GM12878 (cell line): ENCODE measurements at regions of chr4 and their contacts with region 1.

Region 1: DNA sequence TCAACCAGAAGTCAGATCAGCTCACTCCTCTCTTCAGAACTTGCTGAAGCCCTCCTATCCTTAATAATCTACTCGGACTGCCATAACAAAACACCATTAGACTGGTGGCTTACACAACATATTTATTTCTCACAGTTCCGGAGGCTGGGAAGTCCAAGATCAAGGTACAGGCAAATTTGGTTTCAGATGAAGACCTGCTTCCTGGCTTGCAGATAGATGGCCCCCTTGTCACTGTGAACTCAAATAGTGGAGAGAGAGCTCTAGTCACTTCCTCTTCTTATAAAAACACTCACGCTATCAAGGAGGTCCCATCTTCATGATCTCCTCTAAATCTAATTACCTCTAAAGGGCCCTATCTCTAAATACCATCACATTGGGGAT is 125.1 kb downstream of the CAMK2D start:
- DNase-seq: no peak
- ATAC-seq: peak; percentile 69
- H3K4me3 ChIP-seq: peak overlapping the region; percentile 9; the same call in 1 of the 2 replicates
- H3K27ac ChIP-seq: peak overlapping the region; percentile 16
- H3K4me1 ChIP-seq: peaks cover 53% of the 10 kb centered on the region
- H3K27me3 ChIP-seq: no peaks in the 10 kb centered on the region
- CTCF ChIP-seq: peak; percentile 25 to 48 (median 42); a peak in 4 of 6 replicates
- EP300 ChIP-seq: no peak
- POLR2A ChIP-seq: no peak
- RAD21 ChIP-seq: peak; percentile 54

Region 2: GRCh38 chr4:113539408-113539807 is 97.0 kb before region 1 on chr4:
- CTCF ChIA-PET with region 1: no interaction called
- POLR2A ChIA-PET with region 1: interaction called, 4 read pairs
- RAD21 ChIA-PET with region 1: interaction called, 8 read pairs
- SMC1A ChIA-PET with region 1: interaction called, 11 read pairs
- in situ Hi-C with region 1: no loop called
- intact Hi-C with region 1: no loop called
- DNase-seq: no peak
- ATAC-seq: peak; percentile 92
- H3K4me3 ChIP-seq: no peak overlapping the region
- H3K27ac ChIP-seq: no peak overlapping the region
- H3K4me1 ChIP-seq: no peaks in the 10 kb centered on the region
- H3K27me3 ChIP-seq: no peaks in the 10 kb centered on the region
- CTCF ChIP-seq: no peak
- EP300 ChIP-seq: no peak
- POLR2A ChIP-seq: no peak
- RAD21 ChIP-seq: no peak

Region 3: DNA sequence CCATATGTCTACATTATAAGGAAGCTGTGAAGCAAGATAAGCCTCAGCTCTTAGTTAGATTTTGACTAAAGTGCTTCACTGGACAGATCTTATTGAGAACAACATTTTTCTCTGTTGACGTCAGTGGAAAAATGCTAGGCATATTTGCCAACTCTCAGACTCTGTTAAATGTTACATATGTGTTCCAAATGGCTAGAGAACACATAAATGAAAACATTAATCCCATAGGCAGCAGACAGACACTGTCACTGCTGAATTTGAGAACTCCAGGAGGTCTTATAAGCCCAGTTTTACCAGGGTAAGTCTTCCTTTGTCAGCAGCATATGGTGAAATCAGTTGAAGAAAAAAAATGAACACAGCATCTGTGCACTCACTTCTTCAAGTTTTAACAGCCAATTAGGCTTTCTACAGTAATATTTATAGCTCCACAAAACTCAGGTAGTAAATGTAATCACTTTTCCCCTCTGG is 61.8 kb before region 1 on chr4:
- CTCF ChIA-PET with region 1: no interaction called
- POLR2A ChIA-PET with region 1: no interaction called
- RAD21 ChIA-PET with region 1: interaction called, 3 read pairs
- SMC1A ChIA-PET with region 1: interaction called, 12 read pairs
- in situ Hi-C with region 1: no loop called
- intact Hi-C with region 1: no loop called
- DNase-seq: no peak
- ATAC-seq: no peak
- H3K4me3 ChIP-seq: no peak overlapping the region
- H3K27ac ChIP-seq: no peak overlapping the region
- H3K4me1 ChIP-seq: no peaks in the 10 kb centered on the region
- H3K27me3 ChIP-seq: no peaks in the 10 kb centered on the region
- CTCF ChIP-seq: no peak
- EP300 ChIP-seq: no peak
- POLR2A ChIP-seq: no peak
- RAD21 ChIP-seq: no peak

Region 4: GRCh38 chr4:113625902-113626301 is 10.5 kb before region 1 on chr4:
- CTCF ChIA-PET with region 1: interaction called, 9 read pairs
- POLR2A ChIA-PET with region 1: interaction called, 6 read pairs
- RAD21 ChIA-PET with region 1: interaction called, 26 read pairs
- SMC1A ChIA-PET with region 1: interaction called, 33 read pairs
- in situ Hi-C with region 1: no loop called
- intact Hi-C with region 1: no loop called
- DNase-seq: no peak
- ATAC-seq: peak; percentile 45
- H3K4me3 ChIP-seq: no peak overlapping the region
- H3K27ac ChIP-seq: no peak overlapping the region
- H3K4me1 ChIP-seq: no peaks in the 10 kb centered on the region
- H3K27me3 ChIP-seq: no peaks in the 10 kb centered on the region
- CTCF ChIP-seq: no peak
- EP300 ChIP-seq: no peak
- POLR2A ChIP-seq: no peak
- RAD21 ChIP-seq: no peak

Region 5: GRCh38 chr4:113684534-113685091 is 48.2 kb after region 1 on chr4:
- CTCF ChIA-PET with region 1: interaction called, 12 read pairs
- POLR2A ChIA-PET with region 1: interaction called, 3 read pairs
- RAD21 ChIA-PET with region 1: interaction called, 6 read pairs
- SMC1A ChIA-PET with region 1: interaction called, 282 read pairs
- in situ Hi-C with region 1: no loop called
- intact Hi-C with region 1: loop called (anchors 1 kb)
- DNase-seq: no peak
- ATAC-seq: peak; percentile 10; the same call in 2 of the 3 replicates
- H3K4me3 ChIP-seq: no peak overlapping the region
- H3K27ac ChIP-seq: no peak overlapping the region
- H3K4me1 ChIP-seq: peaks cover 32% of the 10 kb centered on the region
- H3K27me3 ChIP-seq: no peaks in the 10 kb centered on the region
- CTCF ChIP-seq: 0 out of 6 replicates have a peak, but pooled peaks of 1 of the 3 experiments have one; percentile 0
- EP300 ChIP-seq: no peak
- POLR2A ChIP-seq: no peak
- RAD21 ChIP-seq: 0 out of 2 replicates have a peak, but pooled peaks have one; percentile 4

Region 6: DNA sequence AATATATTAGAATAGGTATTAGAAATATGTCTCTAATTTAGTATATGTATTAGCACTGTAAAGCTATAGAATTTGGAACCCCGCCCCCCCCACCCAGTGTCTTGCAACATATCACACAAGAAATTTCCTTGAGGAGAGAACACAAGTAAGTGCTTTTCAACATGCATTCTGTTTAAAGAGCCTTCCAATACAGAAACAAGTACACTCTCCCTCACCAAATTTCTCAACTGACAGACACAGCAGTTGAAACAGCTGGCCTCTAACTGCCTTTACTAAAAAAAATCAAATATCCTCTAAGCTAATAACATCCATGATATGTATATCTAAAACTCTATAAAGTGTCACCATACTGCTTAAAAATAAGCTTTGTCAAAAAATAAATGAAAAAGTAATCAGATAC is 112.8 kb after region 1 on chr4:
- CTCF ChIA-PET with region 1: interaction called, 6 read pairs
- POLR2A ChIA-PET with region 1: no interaction called
- RAD21 ChIA-PET with region 1: interaction called, 4 read pairs
- SMC1A ChIA-PET with region 1: interaction called, 18 read pairs
- in situ Hi-C with region 1: no loop called
- intact Hi-C with region 1: no loop called
- DNase-seq: no peak
- ATAC-seq: no peak
- H3K4me3 ChIP-seq: no peak overlapping the region
- H3K27ac ChIP-seq: no peak overlapping the region
- H3K4me1 ChIP-seq: no peaks in the 10 kb centered on the region
- H3K27me3 ChIP-seq: no peaks in the 10 kb centered on the region
- CTCF ChIP-seq: no peak
- EP300 ChIP-seq: no peak
- POLR2A ChIP-seq: no peak
- RAD21 ChIP-seq: no peak

Region 7: DNA sequence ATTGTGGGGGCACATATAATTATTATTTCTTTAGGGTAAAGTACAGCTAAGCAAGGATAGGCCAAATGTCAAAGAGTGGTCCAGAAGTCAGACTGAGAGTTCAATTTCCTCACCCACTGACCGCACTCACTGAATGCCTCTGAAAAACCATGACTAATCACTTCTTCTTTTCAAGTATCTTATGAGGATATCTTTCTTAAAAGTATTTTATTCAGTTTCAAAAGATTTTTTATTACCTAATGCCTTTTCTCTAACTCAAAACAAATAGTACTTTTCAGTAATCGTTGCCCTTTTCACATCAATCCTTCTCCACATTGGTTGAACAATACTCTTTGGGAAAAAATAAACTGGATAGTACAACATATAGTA is 186.8 kb after region 1 on chr4:
- CTCF ChIA-PET with region 1: no interaction called
- POLR2A ChIA-PET with region 1: interaction called, 3 read pairs
- RAD21 ChIA-PET with region 1: interaction called, 12 read pairs
- SMC1A ChIA-PET with region 1: interaction called, 6 read pairs
- in situ Hi-C with region 1: no loop called
- intact Hi-C with region 1: no loop called
- DNase-seq: peak; percentile 85
- ATAC-seq: peak; percentile 84
- H3K4me3 ChIP-seq: peak overlapping the region; percentile 13; the same call in 1 of the 2 replicates
- H3K27ac ChIP-seq: peak overlapping the region; percentile 95
- H3K4me1 ChIP-seq: peaks cover 43% of the 10 kb centered on the region
- H3K27me3 ChIP-seq: no peaks in the 10 kb centered on the region
- CTCF ChIP-seq: no peak
- EP300 ChIP-seq: peak; percentile 54 to 88
- POLR2A ChIP-seq: no peak
- RAD21 ChIP-seq: no peak

Region 8: DNA sequence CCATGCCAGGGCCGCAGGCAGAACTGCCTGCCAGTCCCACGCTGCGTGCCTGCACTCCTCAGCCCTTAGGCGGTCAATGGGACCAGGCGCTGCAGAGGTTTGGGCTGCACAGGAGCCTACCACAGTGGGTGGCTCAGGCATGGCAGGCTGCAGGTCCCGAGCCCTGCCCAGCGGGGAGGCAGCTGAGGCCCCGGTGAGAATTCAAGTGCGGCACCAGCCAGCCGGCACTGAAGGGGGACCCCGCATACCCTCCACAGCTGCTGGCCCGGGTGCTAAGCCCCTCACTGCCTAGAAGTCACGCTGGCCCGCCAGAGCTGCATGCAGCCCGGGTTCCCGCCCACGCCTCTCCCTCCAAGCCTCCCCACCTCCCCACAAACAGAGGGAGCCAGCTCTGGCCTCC is 659.7 kb after region 1 on chr4:
- CTCF ChIA-PET with region 1: no interaction called
- POLR2A ChIA-PET with region 1: no interaction called
- RAD21 ChIA-PET with region 1: no interaction called
- SMC1A ChIA-PET with region 1: no interaction called
- in situ Hi-C with region 1: no loop called
- intact Hi-C with region 1: no loop called
- DNase-seq: no peak
- ATAC-seq: no peak
- H3K4me3 ChIP-seq: no peak overlapping the region
- H3K27ac ChIP-seq: no peak overlapping the region
- H3K4me1 ChIP-seq: no peaks in the 10 kb centered on the region
- H3K27me3 ChIP-seq: no peaks in the 10 kb centered on the region
- CTCF ChIP-seq: no peak
- EP300 ChIP-seq: no peak
- POLR2A ChIP-seq: no peak
- RAD21 ChIP-seq: no peak